Naive thymus-derived CD4-positive, alpha-beta T cell (primary cell): ENCODE measurements at regions of chr16 and their contacts with region 1.

Region 1: DNA sequence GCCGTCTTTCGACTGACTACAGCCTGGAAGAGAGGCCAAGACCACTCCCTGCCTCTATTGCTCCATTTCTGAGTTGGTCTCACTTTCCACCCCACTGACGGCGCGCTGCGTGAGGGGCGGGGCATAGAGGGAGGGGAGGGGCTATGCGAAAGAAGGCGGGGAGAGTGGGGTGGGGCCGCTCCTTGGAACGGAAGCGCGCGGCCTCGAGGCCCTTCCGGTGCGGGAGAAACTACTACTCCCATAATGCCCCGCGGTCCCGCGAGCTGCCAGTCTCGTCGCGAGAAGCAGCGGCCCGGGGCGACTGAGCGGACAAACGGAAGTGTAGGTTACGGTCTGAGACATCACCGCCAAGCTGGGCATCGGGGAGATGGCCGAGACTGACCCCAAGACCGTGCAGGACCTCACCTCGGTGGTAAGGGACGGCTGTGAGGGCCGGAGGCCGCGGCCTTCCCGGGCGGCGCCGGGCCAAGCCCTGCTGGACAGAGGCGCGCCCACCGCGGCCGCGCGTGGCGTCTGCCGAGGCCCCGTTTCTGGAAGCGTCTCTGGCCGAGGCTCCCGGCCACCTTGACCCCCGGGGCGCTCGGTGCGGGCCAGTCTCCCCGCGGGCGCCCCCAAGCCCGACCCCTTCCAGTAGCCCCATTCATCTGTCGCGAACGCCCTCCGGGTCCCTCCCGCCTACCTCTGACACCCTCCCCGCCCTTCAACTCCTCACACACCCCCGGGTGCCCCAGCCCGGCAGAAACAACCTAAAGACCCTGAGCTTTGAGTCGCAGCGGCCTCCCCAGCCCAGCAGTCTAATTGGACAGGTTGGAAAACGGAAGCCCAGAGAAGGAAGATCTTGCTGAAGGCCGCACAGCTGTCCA is at the start of gene HSBP1:
- DNase-seq: peak; percentile 85 to 93 (median 91)
- ATAC-seq: peak; percentile 100
- H3K4me3 ChIP-seq: peak within 1 kb of the TSS; percentile 90
- H3K4me3 Mint-ChIP-seq: peak within 1 kb of the TSS; percentile 91 to 99 (median 98)
- H3K27ac ChIP-seq: peak within 1 kb of the TSS; percentile 87
- H3K27ac Mint-ChIP-seq: peak within 1 kb of the TSS; percentile 87 to 98 (median 95)
- H3K4me1 ChIP-seq: peaks cover 9 to 21% of the 10 kb centered on the region in 2 donors
- H3K4me1 Mint-ChIP-seq: peaks cover 19 to 55% (median 48%) of the 10 kb centered on the region in 7 donors
- H3K27me3 ChIP-seq: no peaks in the 10 kb centered on the region
- H3K27me3 Mint-ChIP-seq: peaks cover 0 to 5% (median 0%) of the 10 kb centered on the region in 5 donors
- total RNA-seq, gene HSBP1: 20.6 to 78.3 (median 32.3) TPM

Region 2: DNA sequence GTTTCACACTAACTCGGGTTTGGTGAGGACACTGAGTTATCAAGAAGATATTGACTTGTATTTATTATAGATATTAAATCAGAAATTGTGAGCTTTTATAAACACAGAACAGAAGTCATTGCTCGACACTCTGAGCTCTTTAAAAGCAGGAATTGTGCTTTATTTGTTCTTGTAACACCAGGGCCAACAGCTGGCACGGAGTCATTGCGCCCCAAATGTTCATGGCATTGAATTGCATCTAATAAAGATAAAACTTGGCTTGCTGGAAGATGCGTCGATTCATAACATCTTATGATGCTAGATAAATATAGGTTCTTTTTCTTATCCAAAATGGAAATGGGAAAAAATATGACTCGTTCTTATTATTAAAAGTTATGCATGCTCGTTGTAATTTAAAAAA is 79.1 kb after region 1 on chr16:
- CTCF ChIA-PET with region 1: no interaction called
- POLR2A ChIA-PET with region 1: no interaction called
- intact Hi-C with region 1: no loop called
- DNase-seq: no peak
- ATAC-seq: no peak
- H3K4me3 ChIP-seq: no peak overlapping the region
- H3K4me3 Mint-ChIP-seq: no peak overlapping the region
- H3K27ac ChIP-seq: no peak overlapping the region
- H3K27ac Mint-ChIP-seq: no peak overlapping the region
- H3K4me1 ChIP-seq: no peaks in the 10 kb centered on the region
- H3K4me1 Mint-ChIP-seq: no peaks in the 10 kb centered on the region
- H3K27me3 ChIP-seq: no peaks in the 10 kb centered on the region
- H3K27me3 Mint-ChIP-seq: peaks cover 0 to 21% (median 5%) of the 10 kb centered on the region in 5 donors

Region 3: DNA sequence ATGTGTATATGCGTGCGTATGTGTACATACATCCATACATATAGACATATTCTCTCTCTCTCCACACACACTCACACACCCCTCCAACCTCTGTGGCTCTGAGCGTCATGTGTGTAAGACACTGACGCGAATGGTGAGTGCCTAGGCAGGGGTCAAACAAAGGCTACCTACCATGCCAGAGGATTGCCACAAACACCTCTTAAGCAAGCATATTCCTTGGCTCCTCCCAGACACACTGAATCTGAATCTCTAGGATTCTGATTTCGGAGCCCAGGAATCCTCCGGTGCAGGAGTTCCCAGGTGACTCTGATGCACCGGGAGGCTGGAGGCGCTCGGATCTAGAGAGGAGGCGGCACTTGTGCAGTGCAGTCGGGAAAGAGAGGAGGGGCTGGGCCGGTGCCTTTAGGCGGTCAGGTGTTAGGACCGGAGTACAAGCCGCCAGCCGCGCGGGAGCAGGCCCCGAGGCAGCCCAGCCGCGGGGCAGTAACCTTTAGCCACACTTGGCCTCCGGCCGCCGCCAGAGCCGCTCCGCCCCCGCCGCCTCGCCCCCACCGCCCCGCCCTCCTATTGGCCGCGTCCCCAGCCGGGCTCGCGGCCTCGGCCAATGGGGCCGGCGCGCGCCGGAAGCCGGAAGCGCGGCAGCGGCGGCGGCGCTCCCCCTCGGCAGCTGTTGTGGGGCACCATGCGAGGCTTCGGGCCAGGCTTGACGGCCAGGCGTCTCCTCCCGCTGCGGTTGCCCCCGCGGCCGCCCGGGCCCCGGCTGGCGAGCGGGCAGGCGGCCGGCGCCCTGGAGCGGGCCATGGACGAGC is 90.7 kb after region 1 on chr16 and contains the start of gene MLYCD:
- CTCF ChIA-PET with region 1: no interaction called
- POLR2A ChIA-PET with region 1: interaction called, 7 read pairs
- intact Hi-C with region 1: loop called (anchors 1 kb)
- DNase-seq: peak; percentile 59 to 82 (median 68)
- ATAC-seq: peak; percentile 96
- H3K4me3 ChIP-seq: peak within 1 kb of the TSS; percentile 61
- H3K4me3 Mint-ChIP-seq: peak within 1 kb of the TSS; percentile 86 to 100 (median 96)
- H3K27ac ChIP-seq: peak within 1 kb of the TSS; percentile 70
- H3K27ac Mint-ChIP-seq: peak within 1 kb of the TSS; percentile 65 to 96 (median 88)
- H3K4me1 ChIP-seq: peaks cover 4 to 17% of the 10 kb centered on the region in 2 donors
- H3K4me1 Mint-ChIP-seq: peaks cover 20 to 50% (median 41%) of the 10 kb centered on the region in 7 donors
- H3K27me3 ChIP-seq: peaks cover 0 to 4% of the 10 kb centered on the region in 2 donors
- H3K27me3 Mint-ChIP-seq: peaks cover 4 to 22% (median 8%) of the 10 kb centered on the region in 5 donors
- total RNA-seq, gene MLYCD: 6.6 to 11.4 (median 8.1) TPM

Region 4: GRCh38 chr16:84144859-84145639 is 337.1 kb after region 1 on chr16 and contains the starts of genes DNAAF1 and HSDL1:
- CTCF ChIA-PET with region 1: no interaction called
- POLR2A ChIA-PET with region 1: no interaction called
- intact Hi-C with region 1: loop called (anchors 1 kb)
- DNase-seq: peak; percentile 88 to 99 (median 94)
- ATAC-seq: peak; percentile 95
- H3K4me3 ChIP-seq: peak within 1 kb of the TSS; percentile 68
- H3K4me3 Mint-ChIP-seq: peak within 1 kb of the TSS; percentile 91 to 98 (median 94)
- H3K27ac ChIP-seq: peak within 1 kb of the TSS; percentile 87
- H3K27ac Mint-ChIP-seq: peak within 1 kb of the TSS; percentile 79 to 95 (median 89)
- H3K4me1 ChIP-seq: peaks cover 4 to 8% of the 10 kb centered on the region in 2 donors
- H3K4me1 Mint-ChIP-seq: peaks cover 9 to 32% (median 29%) of the 10 kb centered on the region in 7 donors
- H3K27me3 ChIP-seq: no peaks in the 10 kb centered on the region
- H3K27me3 Mint-ChIP-seq: peaks cover 0 to 22% (median 0%) of the 10 kb centered on the region in 5 donors
- total RNA-seq, gene DNAAF1: 0.66 to 2.2 TPM in 2 of 5 experiments, not detected in the others
- total RNA-seq, gene HSDL1: 12.6 to 26.6 (median 14.4) TPM